ENCODE measurements at regions of chr17 and their contacts with region 1.

Region 1: GRCh38 chr17:58344047-58344790 is 7.8 kb downstream of the SUPT4H1 start:
- DNase-seq: peak; percentile 76
- CTCF ChIP-seq: no peak

Region 2: DNA sequence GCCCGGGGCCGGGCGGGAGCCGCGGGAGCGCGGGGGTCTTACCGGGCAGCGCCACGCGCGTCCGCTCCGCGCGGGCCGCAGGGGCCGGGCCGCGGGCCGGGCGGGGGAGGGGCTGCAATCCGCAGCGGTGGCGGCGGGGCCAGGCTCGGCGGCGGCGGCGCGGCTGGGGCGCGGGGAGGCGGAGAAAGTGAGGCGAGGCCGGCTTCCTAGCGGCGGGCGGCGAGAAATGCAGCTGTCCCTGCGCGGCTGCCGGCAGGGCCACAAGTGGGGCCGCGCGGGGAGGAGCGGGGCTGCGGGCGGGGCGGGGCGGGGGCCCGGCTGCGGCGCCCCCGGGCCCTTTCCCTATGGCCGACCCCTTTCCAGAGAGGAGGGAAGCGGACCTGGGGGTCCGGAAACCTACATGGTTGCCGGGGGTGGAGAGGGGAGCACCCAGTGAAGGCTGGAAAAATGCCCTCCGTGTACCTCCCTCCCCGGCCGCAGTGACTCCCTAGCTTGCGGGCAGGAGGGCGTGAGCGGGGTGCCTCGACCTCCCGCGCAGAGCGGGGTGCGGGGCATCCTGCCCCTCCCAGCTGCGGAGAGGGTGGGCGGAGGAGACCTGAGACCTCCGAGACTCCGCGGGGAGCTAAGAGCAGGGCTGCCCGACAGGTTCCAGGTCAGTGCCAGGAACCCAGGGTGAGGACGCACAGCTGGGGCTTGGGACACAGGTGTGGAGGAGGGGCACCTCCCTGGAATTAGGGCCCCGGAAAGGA is 388.9 kb before region 1 on chr17 and contains the start of gene CUEDC1:
- CTCF ChIA-PET with region 1: no interaction called
- POLR2A ChIA-PET with region 1: no interaction called
- DNase-seq: peak; percentile 83
- CTCF ChIP-seq: peak; percentile 34

Region 3: DNA sequence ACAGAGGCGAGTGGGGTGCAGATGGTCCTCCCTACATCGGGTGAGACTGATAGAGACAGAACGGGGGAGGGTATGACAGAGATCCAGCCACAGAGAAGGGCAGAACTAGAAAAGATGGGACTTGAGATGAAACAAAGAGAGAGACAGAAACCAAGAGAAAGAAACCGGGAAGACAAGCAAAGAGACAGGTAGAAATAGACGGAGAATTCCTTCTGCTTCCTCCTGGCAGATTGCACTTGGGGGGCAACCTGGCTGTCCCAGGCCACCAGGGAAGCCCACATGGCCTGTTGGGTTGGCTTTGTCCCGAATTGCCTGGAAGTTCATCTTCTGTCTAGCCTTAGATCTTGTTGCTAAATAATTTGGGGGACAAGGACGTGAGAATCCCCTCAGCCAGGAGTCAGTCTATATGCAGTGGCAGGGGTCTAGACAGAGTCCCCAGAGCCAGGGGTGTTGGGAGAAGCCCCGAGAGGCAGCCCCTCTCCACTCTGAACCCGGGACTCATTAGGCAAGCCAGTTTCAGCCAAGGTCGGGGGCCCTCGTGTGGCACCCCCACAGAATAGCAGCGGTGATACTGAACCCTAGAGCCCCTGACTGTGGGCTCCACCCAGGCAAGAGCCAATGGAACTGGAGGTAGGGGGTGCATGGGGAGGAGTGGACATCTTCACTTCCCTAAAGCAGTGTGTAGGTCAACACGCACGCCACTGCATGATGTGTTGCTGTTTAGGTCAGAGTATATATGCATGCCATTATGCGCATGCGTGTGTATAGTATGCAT is 15.0 kb before region 1 on chr17:
- CTCF ChIA-PET with region 1: interaction called, 14 read pairs
- POLR2A ChIA-PET with region 1: interaction called, 90 read pairs
- DNase-seq: peak; percentile 76
- CTCF ChIP-seq: peak; percentile 65

Region 4: DNA sequence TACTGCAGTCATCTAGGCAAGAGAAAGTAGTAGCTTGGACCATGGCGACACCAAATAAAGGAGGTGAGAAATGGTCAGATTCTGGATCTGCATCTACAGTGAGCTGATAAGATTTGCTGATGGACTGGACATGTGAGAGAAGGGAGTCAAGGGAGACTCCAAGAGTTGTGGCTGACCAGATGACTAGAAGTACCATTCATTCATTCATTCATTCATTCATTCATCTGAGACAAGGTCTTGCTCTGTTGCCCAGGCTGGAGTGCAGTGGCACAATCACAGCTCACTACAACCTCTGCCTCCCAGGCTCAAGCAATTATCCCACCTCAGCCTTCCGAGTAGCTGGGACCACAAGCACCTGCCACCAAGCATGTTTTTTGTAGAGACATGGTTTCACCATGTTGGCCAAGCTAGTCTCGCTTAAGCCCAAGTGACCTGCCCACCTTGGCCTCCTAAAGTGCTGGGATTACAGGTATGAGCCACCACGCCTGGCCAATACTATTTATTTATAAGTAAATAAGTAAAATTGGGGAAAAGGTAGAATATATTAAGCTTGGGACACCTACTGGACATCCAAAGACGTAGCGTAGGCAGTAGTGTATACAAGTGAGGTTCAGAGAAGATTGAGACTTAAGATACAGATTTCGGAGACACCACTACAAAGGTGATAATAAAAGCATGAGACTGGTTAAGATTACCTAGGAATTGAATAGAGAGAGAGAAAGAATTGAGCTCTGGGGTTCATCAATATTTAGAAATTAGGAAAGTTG is 88.8 kb after region 1 on chr17:
- CTCF ChIA-PET with region 1: no interaction called
- POLR2A ChIA-PET with region 1: no interaction called
- DNase-seq: no peak
- CTCF ChIP-seq: no peak

Region 5: GRCh38 chr17:58595326-58595725 is 251.1 kb after region 1 on chr17:
- CTCF ChIA-PET with region 1: no interaction called
- POLR2A ChIA-PET with region 1: no interaction called
- DNase-seq: no peak
- CTCF ChIP-seq: peak; percentile 16